ENCODE measurements at regions of chr1 and their contacts with region 1.

Region 1: DNA sequence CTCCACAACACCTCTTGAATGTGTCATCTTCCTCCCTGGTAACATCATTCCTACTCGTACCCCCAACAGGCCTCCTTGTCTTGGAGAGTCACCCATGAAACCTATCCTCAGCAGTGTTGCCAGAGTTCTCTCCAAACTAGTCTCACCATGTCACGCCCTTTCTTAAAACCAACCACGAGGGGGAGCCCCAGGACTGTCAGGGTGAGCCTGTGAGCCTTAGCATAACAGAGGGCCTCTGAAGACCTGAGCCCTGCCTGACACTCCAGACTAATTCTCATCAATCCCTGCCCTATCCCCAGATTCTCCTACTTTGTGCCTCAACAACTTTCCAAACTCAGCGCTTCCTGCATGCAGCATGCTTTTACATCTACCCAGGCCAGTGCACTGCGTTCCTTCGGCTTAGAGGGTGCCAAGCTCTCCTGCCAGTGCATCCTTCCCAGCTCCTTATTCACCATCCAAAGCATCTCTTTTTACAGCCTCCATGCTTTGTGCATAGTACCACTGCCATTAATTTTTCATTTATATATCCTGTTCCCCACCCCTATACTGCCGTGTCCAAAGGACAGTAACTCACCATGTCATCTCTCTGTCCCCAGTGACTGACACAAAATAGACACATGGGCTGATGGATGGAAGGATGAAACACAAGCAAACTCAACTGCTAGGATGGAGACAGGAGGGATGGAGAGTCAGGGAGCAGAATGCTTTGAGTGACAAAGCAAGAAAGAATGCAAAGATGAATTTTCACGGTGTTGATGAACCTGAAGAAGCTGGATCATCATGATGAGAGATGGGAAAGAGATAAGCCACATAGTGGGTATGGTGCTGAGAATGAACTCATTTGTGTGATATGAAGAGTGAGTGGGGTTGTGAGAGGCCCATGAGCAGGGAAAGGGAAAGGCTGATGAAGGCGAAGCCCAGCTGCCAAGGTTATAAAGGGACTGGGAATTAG is 34.0 kb downstream of the ZNF697 start:
- DNase-seq: peak; percentile 79
- ATAC-seq: peak; percentile 81
- H3K4me3 Mint-ChIP-seq: no peak overlapping the region
- H3K27ac Mint-ChIP-seq: no peak overlapping the region
- H3K4me1 Mint-ChIP-seq: no peaks in the 10 kb centered on the region
- H3K27me3 Mint-ChIP-seq: peaks cover 11% of the 10 kb centered on the region

Region 2: DNA sequence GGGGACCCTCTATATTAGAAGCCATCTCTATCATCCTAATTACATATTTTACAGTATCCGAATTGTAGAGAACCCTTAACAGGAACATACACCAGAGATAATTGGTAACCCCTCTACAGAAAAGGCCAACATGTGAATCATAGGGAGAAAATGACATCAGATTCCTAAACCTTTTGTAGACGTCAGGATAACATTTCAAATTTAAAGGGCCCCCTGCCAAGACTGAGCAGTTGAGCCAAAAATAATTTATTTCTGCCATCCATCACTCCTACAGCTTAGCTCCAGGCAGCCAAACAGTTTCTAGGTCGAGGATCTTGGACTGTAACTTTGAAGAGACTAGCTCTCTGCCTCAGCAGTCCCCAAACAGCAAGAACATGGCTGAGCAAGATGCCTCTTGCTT is 12.8 kb after region 1 on chr1:
- CTCF ChIA-PET with region 1: interaction called, 12 read pairs
- DNase-seq: no peak
- ATAC-seq: no peak
- H3K4me3 Mint-ChIP-seq: no peak overlapping the region
- H3K27ac Mint-ChIP-seq: no peak overlapping the region
- H3K4me1 Mint-ChIP-seq: peaks cover 5% of the 10 kb centered on the region
- H3K27me3 Mint-ChIP-seq: peaks cover 46% of the 10 kb centered on the region

Region 3: DNA sequence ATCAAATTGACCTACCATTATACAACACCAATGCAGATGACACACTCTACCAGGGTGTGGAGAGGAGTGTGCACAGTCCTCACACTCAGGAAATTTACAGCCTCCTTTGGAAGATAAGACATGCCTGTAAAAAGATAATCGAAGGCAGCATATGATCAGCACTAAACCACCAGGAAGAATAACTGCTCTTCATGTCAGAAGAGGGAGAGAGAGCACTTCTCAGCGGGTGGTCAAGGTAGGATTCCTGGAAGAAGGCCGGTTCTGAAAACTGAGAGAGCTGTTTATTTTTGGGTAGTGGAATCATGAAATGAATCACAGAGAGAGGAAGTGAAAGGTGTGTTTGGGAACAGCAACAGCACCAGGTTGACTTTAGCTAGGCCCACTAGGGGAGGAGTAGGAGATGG is 48.0 kb after region 1 on chr1:
- CTCF ChIA-PET with region 1: interaction called, 13 read pairs
- DNase-seq: no peak
- ATAC-seq: no peak
- H3K4me3 Mint-ChIP-seq: no peak overlapping the region
- H3K27ac Mint-ChIP-seq: no peak overlapping the region
- H3K4me1 Mint-ChIP-seq: peaks cover 11% of the 10 kb centered on the region
- H3K27me3 Mint-ChIP-seq: peaks cover 29% of the 10 kb centered on the region

Region 4: DNA sequence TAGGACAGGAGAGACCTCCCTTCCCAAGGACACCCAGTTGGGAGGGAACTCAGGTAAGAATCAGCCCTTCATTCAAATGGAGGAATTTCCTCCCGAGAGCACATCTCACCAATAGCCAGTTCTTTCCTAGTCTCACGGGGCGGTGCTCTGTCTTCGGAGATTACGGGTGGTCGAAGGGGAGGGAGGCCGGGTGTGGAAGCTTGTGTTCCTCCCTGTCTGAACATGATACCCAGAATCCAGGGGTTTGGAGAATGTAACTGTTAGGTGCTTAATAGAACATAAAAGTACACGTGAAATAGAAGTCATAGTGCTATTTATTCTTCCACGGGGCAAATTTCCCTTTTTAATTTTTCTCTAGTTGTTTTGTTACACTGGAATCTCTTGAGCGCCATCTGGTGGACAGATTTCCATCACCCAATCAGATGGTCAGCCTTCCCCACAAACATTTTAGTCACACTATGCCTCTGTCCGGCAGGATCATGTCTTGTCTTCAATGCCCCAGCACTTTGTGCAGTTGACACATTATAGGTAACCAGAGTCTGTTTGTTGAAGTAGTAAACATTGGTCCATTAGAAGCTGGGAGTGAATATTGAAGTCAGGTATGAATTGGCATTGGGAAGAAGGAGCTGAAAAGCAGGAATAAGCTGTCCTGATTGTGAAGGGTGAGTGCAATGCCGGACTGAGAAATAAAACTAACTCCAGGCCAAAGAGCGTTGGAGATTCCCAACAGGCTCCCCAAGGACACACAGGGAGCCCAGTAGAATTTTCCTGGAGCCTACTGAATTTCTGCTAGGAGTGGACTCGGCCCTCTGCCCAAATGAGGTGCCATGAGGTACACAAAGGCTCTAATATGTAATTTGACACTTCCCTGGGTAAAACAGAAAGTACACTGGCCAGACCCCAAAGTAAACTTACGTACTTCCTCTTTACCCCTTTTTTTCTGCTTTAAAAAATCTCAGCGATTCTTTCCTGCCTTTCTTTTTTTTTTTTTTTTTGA is 61.6 kb after region 1 on chr1:
- CTCF ChIA-PET with region 1: interaction called, 46 read pairs
- DNase-seq: peak; percentile 77
- ATAC-seq: no peak
- H3K4me3 Mint-ChIP-seq: peak overlapping the region; percentile 27
- H3K27ac Mint-ChIP-seq: no peak overlapping the region
- H3K4me1 Mint-ChIP-seq: peaks cover 6% of the 10 kb centered on the region
- H3K27me3 Mint-ChIP-seq: peaks cover 37% of the 10 kb centered on the region

Measured in activated CD8-positive, alpha-beta memory T cell treated with anti-CD3 and anti-CD28 coated beads, Interleukin-2, amount 10 ng/mL, durations not matched to agents 7 days and 5 days (primary cell).